Endothelial cell of umbilical vein (primary cell): ENCODE measurements at regions of chr1 and their contacts with region 1.

Region 1: GRCh38 chr1:15008783-15009729 is 144.5 kb upstream of the TMEM51 start:
- DNase-seq: peak; percentile 90
- H3K4me3 ChIP-seq: peak overlapping the region in 1 of 3 experiments; percentile 43
- H3K27ac ChIP-seq: peak overlapping the region; percentile 92
- H3K4me1 ChIP-seq: peaks cover 26% of the 10 kb centered on the region
- H3K27me3 ChIP-seq: no peaks in the 10 kb centered on the region
- CTCF ChIP-seq: no peak
- POLR2A ChIP-seq: peak; percentile 22

Region 2: GRCh38 chr1:14913482-14914177 is 95.4 kb before region 1 on chr1:
- CTCF ChIA-PET with region 1: no interaction called
- POLR2A ChIA-PET with region 1: no interaction called
- dilution Hi-C with region 1: no loop called
- intact Hi-C with region 1: no loop called
- DNase-seq: no peak
- H3K4me3 ChIP-seq: no peak overlapping the region
- H3K27ac ChIP-seq: no peak overlapping the region
- H3K4me1 ChIP-seq: no peaks in the 10 kb centered on the region
- H3K27me3 ChIP-seq: no peaks in the 10 kb centered on the region
- CTCF ChIP-seq: no peak
- POLR2A ChIP-seq: no peak

Region 3: GRCh38 chr1:14970115-14970798 is 38.8 kb before region 1 on chr1:
- CTCF ChIA-PET with region 1: interaction called, 4 read pairs
- POLR2A ChIA-PET with region 1: no interaction called
- dilution Hi-C with region 1: no loop called
- intact Hi-C with region 1: loop called (anchors 2 kb)
- DNase-seq: peak; percentile 39
- H3K4me3 ChIP-seq: no peak overlapping the region
- H3K27ac ChIP-seq: no peak overlapping the region
- H3K4me1 ChIP-seq: peaks cover 2% of the 10 kb centered on the region
- H3K27me3 ChIP-seq: no peaks in the 10 kb centered on the region
- CTCF ChIP-seq: no peak
- POLR2A ChIP-seq: no peak

Region 4: GRCh38 chr1:15028102-15028501 is 19.0 kb after region 1 on chr1:
- CTCF ChIA-PET with region 1: interaction called, 26 read pairs
- POLR2A ChIA-PET with region 1: no interaction called
- dilution Hi-C with region 1: no loop called
- intact Hi-C with region 1: loop called (anchors 2 kb)
- DNase-seq: no peak
- H3K4me3 ChIP-seq: no peak overlapping the region
- H3K27ac ChIP-seq: no peak overlapping the region
- H3K4me1 ChIP-seq: peaks cover 3% of the 10 kb centered on the region
- H3K27me3 ChIP-seq: no peaks in the 10 kb centered on the region
- CTCF ChIP-seq: no peak
- POLR2A ChIP-seq: no peak

Region 5: GRCh38 chr1:15261155-15262002 is 252.3 kb after region 1 on chr1:
- CTCF ChIA-PET with region 1: no interaction called
- POLR2A ChIA-PET with region 1: no interaction called
- dilution Hi-C with region 1: no loop called
- intact Hi-C with region 1: loop called (anchors 2 kb)
- DNase-seq: peak; percentile 74
- H3K4me3 ChIP-seq: peak overlapping the region in 2 of 3 experiments; percentile 6 to 25
- H3K27ac ChIP-seq: peak overlapping the region; percentile 78
- H3K4me1 ChIP-seq: peaks cover 23% of the 10 kb centered on the region
- H3K27me3 ChIP-seq: peaks cover 0 to 5% of the 10 kb centered on the region in 2 experiments
- CTCF ChIP-seq: no peak
- POLR2A ChIP-seq: no peak